MCF 10A (cell line): ENCODE measurements at regions of chr2 and their contacts with region 1.

Region 1: DNA sequence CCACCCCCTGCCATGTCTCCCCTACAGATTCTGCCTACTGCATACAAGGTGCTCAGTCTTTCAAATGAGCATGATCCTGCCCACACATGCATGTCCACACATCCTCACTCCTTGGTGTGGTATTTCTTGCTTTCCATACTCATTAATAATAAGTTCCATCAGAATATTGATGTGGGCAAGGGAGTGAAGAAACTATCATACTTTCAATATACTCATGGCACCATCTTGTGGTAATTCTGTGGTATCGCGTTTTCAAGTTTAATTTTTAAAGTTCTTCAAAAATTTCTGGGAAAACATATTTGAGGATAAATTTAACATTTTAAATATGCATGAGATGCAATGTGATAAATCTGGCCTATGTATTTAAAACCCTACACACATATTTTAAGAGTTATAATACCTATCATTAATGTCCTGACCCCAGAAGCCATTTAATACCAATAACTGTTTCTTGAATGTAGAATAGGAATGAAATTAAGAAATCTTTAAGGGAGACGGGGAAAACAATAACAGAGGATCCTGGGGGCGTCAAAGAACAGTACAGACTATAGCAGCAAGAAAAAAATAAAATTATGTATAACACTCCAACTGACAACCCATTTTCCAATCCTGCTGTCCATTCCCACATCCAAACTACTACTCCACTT is 110.1 kb downstream of the ZNF385B start:
- DNase-seq: peak; percentile 32
- H3K4me3 Mint-ChIP-seq: no peak overlapping the region
- H3K27ac Mint-ChIP-seq: no peak overlapping the region
- H3K4me1 Mint-ChIP-seq: peaks cover 26% of the 10 kb centered on the region
- H3K27me3 Mint-ChIP-seq: no peaks in the 10 kb centered on the region
- CTCF ChIP-seq: peak; percentile 66

Region 2: GRCh38 chr2:178796079-178796677 is 955.1 kb before region 1 on chr2:
- CTCF ChIA-PET with region 1: interaction called, 5 read pairs
- POLR2A ChIA-PET with region 1: no interaction called
- intact Hi-C with region 1: loop called (anchors 2 kb)
- DNase-seq: peak; percentile 54
- H3K4me3 Mint-ChIP-seq: no peak overlapping the region
- H3K27ac Mint-ChIP-seq: no peak overlapping the region
- H3K4me1 Mint-ChIP-seq: no peaks in the 10 kb centered on the region
- H3K27me3 Mint-ChIP-seq: peaks cover 23% of the 10 kb centered on the region
- CTCF ChIP-seq: peak; percentile 62

Region 3: GRCh38 chr2:179354739-179355537 is 396.3 kb before region 1 on chr2:
- CTCF ChIA-PET with region 1: no interaction called
- POLR2A ChIA-PET with region 1: no interaction called
- intact Hi-C with region 1: loop called (anchors 5 kb)
- DNase-seq: no peak
- H3K4me3 Mint-ChIP-seq: no peak overlapping the region
- H3K27ac Mint-ChIP-seq: no peak overlapping the region
- H3K4me1 Mint-ChIP-seq: no peaks in the 10 kb centered on the region
- H3K27me3 Mint-ChIP-seq: no peaks in the 10 kb centered on the region
- CTCF ChIP-seq: peak; percentile 20

Region 4: DNA sequence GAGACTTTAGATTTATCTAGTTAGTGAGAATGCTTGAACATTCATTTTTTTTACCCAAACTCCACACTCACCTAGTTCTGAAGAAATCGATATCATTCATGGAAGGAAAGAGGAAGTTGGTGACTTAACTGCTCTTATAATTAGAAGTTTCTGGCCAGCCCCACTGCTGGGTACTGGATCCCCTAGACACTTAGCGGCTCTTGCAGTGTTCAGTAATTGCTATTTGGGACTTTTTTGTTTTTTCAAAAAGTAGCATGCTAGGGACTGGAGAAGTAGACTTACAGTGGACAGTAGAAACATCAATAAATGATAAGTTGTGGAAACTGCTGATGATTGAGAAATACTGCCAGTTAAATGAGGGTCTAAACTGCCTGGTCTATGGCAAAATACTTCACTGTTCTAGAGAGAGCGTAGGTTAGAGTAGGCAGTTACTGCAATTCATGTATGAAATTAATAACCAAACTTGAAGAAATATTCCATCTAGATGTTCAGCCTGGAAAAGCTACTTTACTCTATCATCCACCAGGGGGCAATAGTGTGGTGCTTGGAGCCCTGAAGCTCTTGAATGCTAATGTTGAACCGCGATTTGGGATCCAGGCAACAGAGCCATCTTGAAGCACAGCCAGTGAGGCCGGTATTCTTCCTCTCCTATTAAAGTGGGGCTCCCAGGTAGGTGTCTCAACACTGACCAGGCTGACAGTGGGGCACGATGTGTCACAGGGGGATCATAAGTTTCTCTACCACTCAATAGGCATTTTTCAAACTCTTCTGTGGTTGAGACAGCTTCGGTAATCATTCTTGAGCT is 340.5 kb before region 1 on chr2:
- CTCF ChIA-PET with region 1: interaction called, 5 read pairs
- POLR2A ChIA-PET with region 1: no interaction called
- intact Hi-C with region 1: loop called (anchors 1 kb)
- DNase-seq: peak; percentile 79
- H3K4me3 Mint-ChIP-seq: no peak overlapping the region
- H3K27ac Mint-ChIP-seq: no peak overlapping the region
- H3K4me1 Mint-ChIP-seq: no peaks in the 10 kb centered on the region
- H3K27me3 Mint-ChIP-seq: no peaks in the 10 kb centered on the region
- CTCF ChIP-seq: peak; percentile 52

Region 5: DNA sequence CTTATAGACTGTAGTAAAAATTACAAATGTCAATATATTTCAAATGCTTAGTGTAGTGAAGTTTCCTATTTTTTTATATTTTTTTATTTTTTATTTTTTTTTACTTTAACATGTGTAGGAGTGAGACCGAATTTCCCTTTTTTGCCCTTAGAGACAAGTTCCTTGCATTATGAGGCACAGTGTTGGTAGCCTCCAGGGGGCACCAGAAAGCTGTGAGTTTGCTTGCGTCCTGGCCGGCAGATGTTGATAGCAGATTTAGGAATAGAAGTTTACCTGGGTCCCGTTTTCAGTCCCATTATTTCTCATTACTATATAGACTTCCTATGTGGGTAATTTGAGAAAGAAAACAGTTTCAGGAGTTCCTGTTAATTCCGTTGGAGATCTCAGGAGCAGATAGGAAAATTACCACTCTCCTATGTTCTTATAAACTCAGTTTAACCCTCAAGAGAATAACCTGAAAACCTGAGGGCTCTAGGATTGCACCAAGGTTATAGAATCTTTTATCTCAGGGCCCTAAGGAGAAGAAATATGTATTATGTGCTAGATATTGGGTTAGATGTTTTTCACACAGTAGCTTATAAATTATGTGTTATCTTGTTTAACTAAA is 329.1 kb before region 1 on chr2:
- CTCF ChIA-PET with region 1: interaction called, 33 read pairs
- POLR2A ChIA-PET with region 1: no interaction called
- intact Hi-C with region 1: loop called (anchors 1 kb)
- DNase-seq: peak; percentile 79
- H3K4me3 Mint-ChIP-seq: no peak overlapping the region
- H3K27ac Mint-ChIP-seq: no peak overlapping the region
- H3K4me1 Mint-ChIP-seq: no peaks in the 10 kb centered on the region
- H3K27me3 Mint-ChIP-seq: no peaks in the 10 kb centered on the region
- CTCF ChIP-seq: peak; percentile 73

Region 6: DNA sequence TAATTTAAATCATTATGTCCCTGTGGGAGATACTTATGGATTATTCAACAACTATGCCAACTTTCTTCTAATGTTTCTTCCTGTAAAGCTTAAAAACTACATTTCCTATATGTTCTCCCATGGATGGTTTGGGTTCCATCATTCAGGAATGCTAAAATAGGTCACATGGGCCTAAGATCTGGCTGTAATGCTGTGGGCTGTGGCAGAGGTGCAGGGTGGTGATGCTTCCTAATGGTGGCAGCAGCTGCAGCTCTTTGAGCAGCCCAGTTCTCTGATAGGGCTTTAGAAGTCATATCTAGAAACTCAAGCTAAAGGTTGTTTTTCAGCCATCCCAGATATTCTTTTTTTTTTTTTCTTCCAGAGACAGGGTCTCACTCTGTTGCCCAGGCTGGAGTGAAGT is 156.0 kb before region 1 on chr2:
- CTCF ChIA-PET with region 1: no interaction called
- POLR2A ChIA-PET with region 1: interaction called, 3 read pairs
- intact Hi-C with region 1: loop called (anchors 5 kb)
- DNase-seq: peak; percentile 16
- H3K4me3 Mint-ChIP-seq: no peak overlapping the region
- H3K27ac Mint-ChIP-seq: no peak overlapping the region
- H3K4me1 Mint-ChIP-seq: peaks cover 16% of the 10 kb centered on the region
- H3K27me3 Mint-ChIP-seq: no peaks in the 10 kb centered on the region
- CTCF ChIP-seq: no peak

Region 7: GRCh38 chr2:179661986-179662385 is 89.3 kb before region 1 on chr2:
- CTCF ChIA-PET with region 1: no interaction called
- POLR2A ChIA-PET with region 1: no interaction called
- intact Hi-C with region 1: no loop called
- DNase-seq: no peak
- H3K4me3 Mint-ChIP-seq: no peak overlapping the region
- H3K27ac Mint-ChIP-seq: no peak overlapping the region
- H3K4me1 Mint-ChIP-seq: no peaks in the 10 kb centered on the region
- H3K27me3 Mint-ChIP-seq: no peaks in the 10 kb centered on the region
- CTCF ChIP-seq: no peak